Mammary epithelial cell (primary cell): ENCODE measurements at regions of chr5 and their contacts with region 1.

Region 1: GRCh38 chr5:172361566-172362238 is 78.1 kb upstream of the UBTD2 start:
- DNase-seq: peak; percentile 99
- H3K4me3 ChIP-seq: no peak overlapping the region
- H3K27ac ChIP-seq: peak overlapping the region; percentile 83
- H3K4me1 ChIP-seq: peaks cover 12% of the 10 kb centered on the region
- H3K27me3 ChIP-seq: no peaks in the 10 kb centered on the region
- CTCF ChIP-seq: no peak

Region 2: DNA sequence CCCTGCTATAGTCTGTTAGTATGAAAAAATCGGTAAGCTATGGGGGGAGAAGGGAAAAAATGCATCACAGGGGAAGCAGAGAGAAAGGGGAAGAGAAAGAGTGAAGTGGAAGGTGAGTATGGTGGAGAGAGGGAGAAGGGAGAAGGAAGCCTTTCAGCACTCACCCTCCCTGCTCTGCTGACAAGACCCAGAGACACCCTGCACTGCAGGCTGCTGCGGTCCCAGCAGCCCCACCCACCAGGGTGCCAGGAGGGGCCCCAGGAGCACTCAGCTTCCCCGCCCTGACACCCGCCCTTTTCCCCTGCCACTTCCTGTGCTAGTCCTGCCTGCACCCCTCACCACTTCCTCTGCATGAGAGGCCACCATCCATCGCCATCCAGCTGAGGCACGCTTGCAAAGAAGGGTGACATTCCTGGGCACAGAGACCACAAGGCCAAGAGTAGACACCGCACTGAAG is 186.4 kb before region 1 on chr5:
- CTCF ChIA-PET with region 1: no interaction called
- dilution Hi-C with region 1: no loop called
- in situ Hi-C with region 1: no loop called
- intact Hi-C with region 1: no loop called
- DNase-seq: no peak
- H3K4me3 ChIP-seq: no peak overlapping the region
- H3K27ac ChIP-seq: no peak overlapping the region
- H3K4me1 ChIP-seq: peaks cover 29% of the 10 kb centered on the region
- H3K27me3 ChIP-seq: no peaks in the 10 kb centered on the region
- CTCF ChIP-seq: no peak

Region 3: DNA sequence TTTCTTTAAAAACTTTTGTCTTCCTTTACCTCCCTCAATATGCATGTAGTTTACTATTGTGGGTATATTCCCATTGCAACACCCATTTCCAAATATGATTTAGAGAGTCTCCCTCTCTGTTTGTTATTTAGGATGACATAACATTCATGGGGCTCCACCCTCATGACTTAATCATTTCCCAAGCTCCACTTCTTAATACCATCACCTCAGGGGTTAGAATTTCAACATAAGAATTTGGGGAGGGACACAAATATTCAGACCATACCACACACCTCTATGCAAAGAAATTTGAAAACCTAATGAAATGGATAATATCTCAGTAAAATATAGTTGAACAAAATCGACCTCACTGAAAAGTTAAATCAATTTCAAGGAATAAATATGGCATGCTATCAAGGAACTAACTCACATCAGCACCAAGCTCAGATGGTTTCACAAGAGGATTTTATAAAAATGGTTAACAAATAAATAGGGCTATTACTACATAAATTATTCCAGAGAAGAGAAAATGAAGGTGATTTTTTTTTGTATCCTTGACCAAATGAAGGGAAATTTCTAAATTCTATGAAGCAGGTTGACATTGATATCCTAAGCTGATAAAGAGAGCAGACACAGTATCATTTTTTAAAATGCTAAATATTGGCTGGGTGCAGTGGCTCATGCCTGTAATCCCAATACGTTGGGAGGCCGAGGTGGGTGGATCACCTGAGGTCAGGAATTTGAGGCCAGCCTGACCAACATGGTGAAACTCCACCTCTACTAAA is 57.9 kb before region 1 on chr5:
- CTCF ChIA-PET with region 1: no interaction called
- dilution Hi-C with region 1: no loop called
- in situ Hi-C with region 1: no loop called
- intact Hi-C with region 1: loop called (anchors 5 kb)
- DNase-seq: peak; percentile 78
- H3K4me3 ChIP-seq: no peak overlapping the region
- H3K27ac ChIP-seq: peak overlapping the region; percentile 44
- H3K4me1 ChIP-seq: no peaks in the 10 kb centered on the region
- H3K27me3 ChIP-seq: no peaks in the 10 kb centered on the region
- CTCF ChIP-seq: no peak

Region 4: GRCh38 chr5:172315587-172316493 is 45.9 kb before region 1 on chr5:
- CTCF ChIA-PET with region 1: no interaction called
- dilution Hi-C with region 1: loop called (anchors 5 kb)
- in situ Hi-C with region 1: no loop called
- intact Hi-C with region 1: loop called (anchors 2 kb)
- DNase-seq: no peak
- H3K4me3 ChIP-seq: no peak overlapping the region
- H3K27ac ChIP-seq: peak overlapping the region; percentile 90
- H3K4me1 ChIP-seq: peaks cover 26% of the 10 kb centered on the region
- H3K27me3 ChIP-seq: no peaks in the 10 kb centered on the region
- CTCF ChIP-seq: no peak

Region 5: DNA sequence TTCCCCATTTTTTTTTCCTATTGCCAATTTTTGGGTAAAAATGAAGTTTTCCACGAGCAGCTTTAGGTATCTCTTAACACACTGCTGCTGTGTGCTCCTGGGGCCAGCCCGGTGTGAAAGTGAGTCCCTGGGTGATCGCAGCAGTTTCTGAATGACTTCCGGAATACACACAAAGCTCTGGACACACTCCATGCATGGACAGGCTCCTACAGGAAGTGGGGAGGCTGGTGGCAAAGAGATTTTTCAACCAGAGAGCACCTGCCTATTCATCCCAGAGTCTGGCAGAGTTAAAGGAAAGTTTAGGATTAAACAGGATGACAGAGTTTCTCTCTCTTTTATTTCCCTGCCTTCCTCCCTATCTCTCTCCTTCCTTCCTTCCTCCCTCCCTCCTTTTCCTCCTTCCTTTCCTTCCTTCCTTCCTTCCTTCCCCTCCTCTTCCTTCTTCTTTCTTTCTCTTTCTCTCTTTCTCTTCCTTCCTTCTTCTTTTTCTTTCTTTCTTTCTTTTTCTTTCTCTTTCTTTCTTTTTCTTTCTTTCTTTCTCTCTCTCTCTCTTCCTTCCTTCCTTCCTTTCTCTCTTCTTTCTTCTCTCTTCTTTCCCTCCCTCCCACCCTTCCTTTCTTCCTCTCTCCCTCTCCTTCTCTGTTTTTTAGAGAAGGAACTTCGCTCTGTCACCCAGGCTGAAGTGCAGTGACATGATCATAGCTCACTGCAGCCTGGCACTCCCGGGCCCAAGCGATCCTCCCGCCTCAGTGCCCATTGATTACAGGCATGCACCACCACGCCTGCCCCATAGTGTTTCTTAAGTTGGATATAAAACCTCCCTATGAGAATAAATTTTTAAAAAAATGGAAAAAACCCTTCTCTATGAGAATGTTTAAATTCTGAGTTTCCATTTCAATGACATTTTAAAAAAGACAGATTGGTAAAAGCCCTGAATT is 39.4 kb before region 1 on chr5:
- CTCF ChIA-PET with region 1: no interaction called
- dilution Hi-C with region 1: loop called (anchors 5 kb)
- in situ Hi-C with region 1: no loop called
- intact Hi-C with region 1: no loop called
- DNase-seq: peak; percentile 42
- H3K4me3 ChIP-seq: no peak overlapping the region
- H3K27ac ChIP-seq: peak overlapping the region; percentile 25
- H3K4me1 ChIP-seq: peaks cover 21% of the 10 kb centered on the region
- H3K27me3 ChIP-seq: no peaks in the 10 kb centered on the region
- CTCF ChIP-seq: no peak

Region 6: GRCh38 chr5:172377856-172378255 is 16.2 kb after region 1 on chr5:
- CTCF ChIA-PET with region 1: no interaction called
- dilution Hi-C with region 1: no loop called
- in situ Hi-C with region 1: no loop called
- intact Hi-C with region 1: no loop called
- DNase-seq: no peak
- H3K4me3 ChIP-seq: no peak overlapping the region
- H3K27ac ChIP-seq: no peak overlapping the region
- H3K4me1 ChIP-seq: peaks cover 9% of the 10 kb centered on the region
- H3K27me3 ChIP-seq: no peaks in the 10 kb centered on the region
- CTCF ChIP-seq: no peak

Region 7: GRCh38 chr5:172407822-172408221 is 46.1 kb after region 1 on chr5:
- CTCF ChIA-PET with region 1: no interaction called
- dilution Hi-C with region 1: loop called (anchors 5 kb)
- in situ Hi-C with region 1: no loop called
- intact Hi-C with region 1: no loop called
- DNase-seq: peak; percentile 78
- H3K4me3 ChIP-seq: no peak overlapping the region
- H3K27ac ChIP-seq: no peak overlapping the region
- H3K4me1 ChIP-seq: peaks cover 16% of the 10 kb centered on the region
- H3K27me3 ChIP-seq: no peaks in the 10 kb centered on the region
- CTCF ChIP-seq: no peak